Mammary epithelial cell (primary cell): ENCODE measurements at regions of chr4 and their contacts with region 1.

Region 1: GRCh38 chr4:91058345-91058744 is 931.2 kb downstream of the CCSER1 start:
- DNase-seq: peak; percentile 81
- H3K4me3 ChIP-seq: no peak overlapping the region
- H3K27ac ChIP-seq: peak overlapping the region; percentile 74
- H3K4me1 ChIP-seq: peaks cover 12% of the 10 kb centered on the region
- H3K27me3 ChIP-seq: no peaks in the 10 kb centered on the region
- CTCF ChIP-seq: no peak

Region 2: DNA sequence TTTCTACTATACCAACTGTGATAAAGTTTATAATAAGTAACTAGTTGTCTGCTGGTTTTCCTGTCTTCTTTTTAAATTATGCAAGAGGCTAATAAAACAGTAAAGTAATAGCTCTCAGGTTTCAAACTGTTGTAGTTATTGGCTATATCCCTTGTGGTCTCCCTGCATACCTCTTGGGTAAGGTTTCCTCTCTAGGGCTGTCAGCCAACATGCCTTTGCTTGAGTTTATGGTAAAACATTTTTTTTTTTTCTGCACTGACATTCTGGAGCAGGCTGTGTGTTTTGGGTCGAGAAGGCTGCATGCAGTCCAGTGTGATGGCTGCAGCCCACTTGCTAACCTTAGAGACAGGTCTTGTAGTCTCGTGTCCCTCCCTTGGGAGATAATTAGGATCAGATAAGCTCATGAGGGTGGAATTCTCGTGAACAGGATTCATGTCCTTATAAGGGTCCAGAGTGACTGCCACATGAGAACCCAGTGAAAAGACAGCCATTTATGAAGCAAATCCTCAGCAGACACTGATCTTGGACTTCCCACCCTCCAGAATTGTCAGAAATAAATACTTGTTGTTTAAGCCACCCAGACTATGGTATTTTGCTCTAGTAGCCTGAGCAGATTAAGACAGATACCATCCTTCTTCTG is 100.0 kb before region 1 on chr4:
- CTCF ChIA-PET with region 1: no interaction called
- dilution Hi-C with region 1: no loop called
- in situ Hi-C with region 1: no loop called
- intact Hi-C with region 1: loop called (anchors 5 kb)
- DNase-seq: peak; percentile 87
- H3K4me3 ChIP-seq: peak overlapping the region in 1 of 3 experiments; percentile 8
- H3K27ac ChIP-seq: no peak overlapping the region
- H3K4me1 ChIP-seq: peaks cover 12% of the 10 kb centered on the region
- H3K27me3 ChIP-seq: no peaks in the 10 kb centered on the region
- CTCF ChIP-seq: no peak

Region 3: GRCh38 chr4:92234393-92235176 is 1176.2 kb after region 1 on chr4:
- CTCF ChIA-PET with region 1: no interaction called
- dilution Hi-C with region 1: no loop called
- in situ Hi-C with region 1: no loop called
- intact Hi-C with region 1: loop called (anchors 10 kb)
- DNase-seq: peak; percentile 94
- H3K4me3 ChIP-seq: peak overlapping the region in 2 of 3 experiments; percentile 4 to 8
- H3K27ac ChIP-seq: peak overlapping the region; percentile 84
- H3K4me1 ChIP-seq: peaks cover 33% of the 10 kb centered on the region
- H3K27me3 ChIP-seq: no peaks in the 10 kb centered on the region
- CTCF ChIP-seq: no peak